ENCODE measurements at regions of chr16 and their contacts with region 1.

Region 1: DNA sequence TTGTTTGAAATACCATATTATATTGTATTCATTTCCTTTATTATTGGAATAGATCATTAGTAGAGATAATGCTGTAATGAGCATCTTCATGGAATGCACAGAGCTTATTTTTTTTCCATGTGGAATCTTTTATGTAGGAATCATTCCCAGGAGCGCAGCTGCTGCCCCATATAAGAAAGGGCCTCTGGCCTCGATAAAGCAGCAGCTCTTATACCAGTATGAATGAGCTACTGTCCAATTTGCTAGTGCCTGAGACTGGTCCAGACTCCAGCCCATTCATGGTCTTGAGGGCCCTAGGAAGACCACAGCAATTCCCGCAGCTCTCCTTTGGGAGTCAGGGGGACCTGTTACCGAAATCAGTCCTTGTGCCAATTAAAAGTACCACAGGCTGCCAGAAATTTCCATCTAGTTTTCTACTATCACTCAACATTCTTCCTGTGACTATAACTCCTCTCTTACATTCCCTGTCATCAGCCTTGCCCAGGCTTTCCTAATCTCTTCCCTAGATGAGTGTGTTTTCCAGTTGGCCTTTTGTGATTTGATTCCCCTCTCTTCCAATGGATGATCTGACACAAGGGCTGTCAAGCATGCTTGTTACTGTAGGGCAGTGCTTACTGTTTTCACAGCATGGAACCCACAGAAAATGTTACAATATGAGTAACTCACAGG is 1.9 kb downstream of the ZNF843 start:
- DNase-seq: no peak
- ATAC-seq: no peak
- H3K4me3 ChIP-seq: no peak overlapping the region
- H3K27ac ChIP-seq: no peak overlapping the region
- H3K4me1 ChIP-seq: no peaks in the 10 kb centered on the region
- H3K27me3 ChIP-seq: no peaks in the 10 kb centered on the region
- CTCF ChIP-seq: no peak
- POLR2A ChIP-seq: no peak
- RAD21 ChIP-seq: no peak

Region 2: DNA sequence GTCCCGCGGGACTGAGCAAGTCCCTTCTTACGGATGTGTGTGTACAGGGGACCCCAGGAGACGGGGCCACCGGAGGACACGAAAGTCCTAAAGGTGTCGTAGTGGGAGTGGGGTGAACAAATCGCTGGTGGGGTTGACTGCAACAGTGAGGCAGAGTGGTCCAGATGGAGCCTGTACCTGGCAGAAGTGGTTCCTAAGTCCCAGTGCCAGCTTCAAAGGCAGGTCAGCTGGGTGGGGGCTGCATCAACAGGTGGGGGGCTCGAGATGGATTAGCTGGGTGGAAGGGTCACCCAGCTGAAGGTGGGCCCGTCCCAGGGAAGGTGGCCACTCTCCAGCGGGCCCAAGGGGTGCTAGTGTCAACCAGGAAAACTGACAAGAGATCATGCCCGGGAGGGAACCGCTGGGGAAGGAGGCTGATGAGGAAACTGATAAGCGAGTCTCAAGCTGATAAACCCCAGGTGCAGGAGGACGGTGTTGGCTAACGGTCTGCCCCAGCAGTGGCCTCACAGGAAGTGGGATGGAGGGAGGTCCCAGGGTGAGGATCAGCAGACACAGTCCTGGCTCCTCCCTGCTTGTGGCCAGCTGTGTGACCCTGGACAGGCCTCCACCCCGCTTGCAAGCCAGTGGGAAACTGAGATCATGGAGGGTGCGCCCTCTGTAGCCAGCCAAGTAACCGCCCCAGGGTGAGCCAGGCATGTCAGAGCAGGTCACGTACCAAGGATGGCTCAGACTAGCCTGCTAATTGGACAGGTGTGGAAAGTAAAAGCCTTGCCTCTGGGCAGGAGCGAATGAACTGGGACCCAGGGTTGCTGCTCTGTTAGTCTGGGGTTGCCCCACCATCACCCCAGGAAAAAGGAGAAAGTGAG is 490.8 kb before region 1 on chr16:
- CTCF ChIA-PET with region 1: interaction called, 3 read pairs
- POLR2A ChIA-PET with region 1: no interaction called
- dilution Hi-C with region 1: no loop called
- in situ Hi-C with region 1: no loop called
- intact Hi-C with region 1: loop called (anchors 1 kb)
- DNase-seq: peak; percentile 80
- ATAC-seq: peak; percentile 47
- H3K4me3 ChIP-seq: peak overlapping the region; percentile 79
- H3K27ac ChIP-seq: peak overlapping the region; percentile 68
- H3K4me1 ChIP-seq: peaks cover 7% of the 10 kb centered on the region
- H3K27me3 ChIP-seq: no peaks in the 10 kb centered on the region
- CTCF ChIP-seq: no peak
- POLR2A ChIP-seq: peak; percentile 59; the same call in 1 of the 2 replicates
- RAD21 ChIP-seq: no peak

Region 3: GRCh38 chr16:31032736-31033708 is 407.6 kb before region 1 on chr16 and contains the start of gene STX4:
- CTCF ChIA-PET with region 1: no interaction called
- POLR2A ChIA-PET with region 1: no interaction called
- dilution Hi-C with region 1: no loop called
- in situ Hi-C with region 1: no loop called
- intact Hi-C with region 1: loop called (anchors 1 kb)
- DNase-seq: peak; percentile 98
- ATAC-seq: peak; percentile 89
- H3K4me3 ChIP-seq: peak within 1 kb of the TSS; percentile 58
- H3K27ac ChIP-seq: peak within 1 kb of the TSS; percentile 68
- H3K4me1 ChIP-seq: peaks cover 7% of the 10 kb centered on the region
- H3K27me3 ChIP-seq: no peaks in the 10 kb centered on the region
- CTCF ChIP-seq: no peak
- POLR2A ChIP-seq: peak; percentile 60; the same call in 1 of the 2 replicates
- RAD21 ChIP-seq: 0 out of 2 replicates have a peak, but pooled peaks have one; percentile 4
- total RNA-seq, gene STX4: 23.5 and 25.0 TPM in 2 replicates

Region 4: GRCh38 chr16:31196324-31197088 is 244.1 kb before region 1 on chr16:
- CTCF ChIA-PET with region 1: no interaction called
- POLR2A ChIA-PET with region 1: no interaction called
- dilution Hi-C with region 1: no loop called
- in situ Hi-C with region 1: loop called (anchors 5 kb)
- intact Hi-C with region 1: loop called (anchors 2 kb)
- DNase-seq: no peak
- ATAC-seq: no peak
- H3K4me3 ChIP-seq: no peak overlapping the region
- H3K27ac ChIP-seq: no peak overlapping the region
- H3K4me1 ChIP-seq: no peaks in the 10 kb centered on the region
- H3K27me3 ChIP-seq: no peaks in the 10 kb centered on the region
- CTCF ChIP-seq: no peak
- POLR2A ChIP-seq: no peak
- RAD21 ChIP-seq: no peak

Region 5: GRCh38 chr16:31382485-31383161 is 58.0 kb before region 1 on chr16:
- CTCF ChIA-PET with region 1: interaction called, 4 read pairs
- POLR2A ChIA-PET with region 1: no interaction called
- dilution Hi-C with region 1: no loop called
- in situ Hi-C with region 1: no loop called
- intact Hi-C with region 1: loop called (anchors 10 kb)
- DNase-seq: peak; percentile 40
- ATAC-seq: peak; percentile 89
- H3K4me3 ChIP-seq: no peak overlapping the region
- H3K27ac ChIP-seq: no peak overlapping the region
- H3K4me1 ChIP-seq: no peaks in the 10 kb centered on the region; the same call in 1 of the 2 replicates
- H3K27me3 ChIP-seq: peaks cover 14% of the 10 kb centered on the region
- CTCF ChIP-seq: peak; percentile 64
- POLR2A ChIP-seq: no peak
- RAD21 ChIP-seq: peak; percentile 51

Region 6: GRCh38 chr16:31404353-31405064 is 36.1 kb before region 1 on chr16:
- CTCF ChIA-PET with region 1: no interaction called
- POLR2A ChIA-PET with region 1: no interaction called
- dilution Hi-C with region 1: no loop called
- in situ Hi-C with region 1: no loop called
- intact Hi-C with region 1: no loop called
- DNase-seq: no peak
- ATAC-seq: peak; percentile 80
- H3K4me3 ChIP-seq: peak overlapping the region; percentile 3; the same call in 1 of the 2 replicates
- H3K27ac ChIP-seq: no peak overlapping the region
- H3K4me1 ChIP-seq: no peaks in the 10 kb centered on the region
- H3K27me3 ChIP-seq: peaks cover 3% of the 10 kb centered on the region
- CTCF ChIP-seq: no peak
- POLR2A ChIP-seq: no peak
- RAD21 ChIP-seq: no peak

Region 7: DNA sequence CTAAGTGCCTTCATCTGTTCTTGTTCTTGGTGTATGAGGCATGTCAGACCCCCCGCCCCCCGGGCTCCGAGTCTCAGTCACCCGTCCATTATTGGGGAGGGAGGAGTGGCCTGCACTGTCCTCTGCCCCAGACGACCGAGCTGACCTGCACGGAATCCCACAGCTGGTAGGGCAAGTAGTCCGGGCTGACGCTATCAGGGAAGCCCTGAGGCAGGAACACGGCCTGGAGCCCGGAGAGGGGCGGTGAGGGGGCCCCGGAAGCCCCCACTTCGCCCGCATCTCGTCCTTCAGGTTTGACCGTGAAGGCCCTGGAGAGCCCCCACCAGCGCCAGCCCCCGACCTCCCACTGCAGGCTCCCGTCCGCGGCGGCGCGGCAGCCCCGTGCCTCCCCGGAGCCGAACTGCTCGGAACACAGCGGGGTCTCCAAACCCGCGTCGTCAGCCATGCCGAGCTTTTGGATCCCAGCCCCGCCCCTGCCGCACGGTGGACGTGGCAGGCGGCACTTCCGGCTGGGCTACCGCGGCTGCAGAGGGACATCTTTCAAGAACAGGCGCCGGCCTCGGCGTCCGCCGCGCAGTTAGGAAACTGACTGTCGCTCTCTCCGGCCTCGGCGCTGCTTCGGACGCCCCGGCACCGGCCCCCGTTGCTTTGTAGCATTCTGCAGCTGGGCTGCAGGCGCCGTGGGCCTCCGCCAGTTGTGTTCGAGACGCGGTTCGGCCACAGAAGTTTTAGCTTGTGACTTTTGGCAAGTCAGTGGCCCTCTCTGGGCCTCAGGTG is 67.5 kb after region 1 on chr16 and contains the start of gene RUSF1:
- CTCF ChIA-PET with region 1: no interaction called
- POLR2A ChIA-PET with region 1: no interaction called
- dilution Hi-C with region 1: no loop called
- in situ Hi-C with region 1: loop called (anchors 10 kb)
- intact Hi-C with region 1: loop called (anchors 10 kb)
- DNase-seq: peak; percentile 87
- ATAC-seq: peak; percentile 93
- H3K4me3 ChIP-seq: peak within 1 kb of the TSS; percentile 94
- H3K27ac ChIP-seq: peak within 1 kb of the TSS; percentile 99
- H3K4me1 ChIP-seq: peaks cover 5% of the 10 kb centered on the region
- H3K27me3 ChIP-seq: no peaks in the 10 kb centered on the region
- CTCF ChIP-seq: no peak
- POLR2A ChIP-seq: peak; percentile 94
- RAD21 ChIP-seq: no peak
- total RNA-seq, gene RUSF1: 22.2 and 22.9 TPM in 2 replicates

Region 8: GRCh38 chr16:31572821-31573220 is 132.2 kb after region 1 on chr16:
- CTCF ChIA-PET with region 1: no interaction called
- POLR2A ChIA-PET with region 1: no interaction called
- dilution Hi-C with region 1: no loop called
- in situ Hi-C with region 1: no loop called
- intact Hi-C with region 1: no loop called
- DNase-seq: no peak
- ATAC-seq: no peak
- H3K4me3 ChIP-seq: no peak overlapping the region
- H3K27ac ChIP-seq: no peak overlapping the region
- H3K4me1 ChIP-seq: no peaks in the 10 kb centered on the region
- H3K27me3 ChIP-seq: peaks cover 10% of the 10 kb centered on the region; the same call in 1 of the 2 replicates
- CTCF ChIP-seq: no peak
- POLR2A ChIP-seq: no peak
- RAD21 ChIP-seq: no peak

Measured in IMR-90 (cell line).